ENCODE measurements at regions of chr16 and their contacts with region 1.

Region 1: GRCh38 chr16:85607321-85607765 is 5.8 kb upstream of the GSE1 start:
- DNase-seq: peak; percentile 51 to 76
- H3K4me3 ChIP-seq: peak overlapping the region in 1 of 4 donors; percentile 18
- H3K27ac ChIP-seq: peak overlapping the region in 4 of 5 donors; percentile 48 to 56 (median 55)
- H3K4me1 ChIP-seq: peaks cover 55 to 87% (median 80%) of the 10 kb centered on the region in 4 donors
- H3K27me3 ChIP-seq: no peaks in the 10 kb centered on the region
- CTCF ChIP-seq: no peak
- EP300 ChIP-seq: no peak
- POLR2A ChIP-seq: no peak

Region 2: DNA sequence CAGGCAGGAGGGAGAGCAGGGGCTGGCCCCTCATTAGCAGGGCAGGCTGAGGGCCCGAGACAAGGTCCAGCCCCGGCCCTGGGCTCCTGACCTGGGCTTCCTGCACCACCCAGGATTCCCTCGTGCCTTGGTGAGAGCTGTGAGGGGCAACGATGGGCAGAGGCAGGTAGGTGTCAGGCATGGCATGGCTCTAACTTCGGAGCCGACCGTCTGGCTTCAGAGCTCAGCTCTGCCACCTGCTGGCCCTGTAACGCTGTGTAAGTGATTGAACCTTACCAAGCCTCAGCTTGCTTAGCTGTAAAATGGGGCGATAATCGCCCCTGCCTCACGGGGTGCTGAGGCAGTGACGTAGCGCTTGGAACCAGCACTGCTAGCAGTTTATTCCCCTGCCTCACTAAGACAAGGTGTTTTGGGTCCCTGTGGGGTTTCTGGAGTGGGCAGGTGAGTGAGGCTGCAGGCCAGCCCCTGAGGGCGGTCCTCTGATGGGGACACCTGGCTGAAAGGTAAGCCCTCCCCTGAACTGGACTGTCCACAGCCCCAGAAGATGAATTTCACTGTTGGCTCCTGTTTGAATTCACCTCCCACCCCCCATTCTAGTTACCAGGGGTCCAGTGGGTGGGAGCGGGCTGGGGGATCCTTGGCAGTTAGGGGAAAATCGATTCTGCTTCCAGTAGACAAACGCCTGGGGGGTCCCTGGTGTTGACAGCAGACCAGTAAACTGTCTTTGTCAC is 179.0 kb before region 1 on chr16:
- intact Hi-C with region 1: loop called (anchors 5 kb)
- DNase-seq: peak; percentile 72
- H3K4me3 ChIP-seq: no peak overlapping the region
- H3K27ac ChIP-seq: no peak overlapping the region
- H3K4me1 ChIP-seq: peaks cover 18 to 30% (median 23%) of the 10 kb centered on the region in 4 donors
- H3K27me3 ChIP-seq: no peaks in the 10 kb centered on the region
- CTCF ChIP-seq: peak in 4 of 7 experiments; percentile 27 to 61 (median 49)
- EP300 ChIP-seq: no peak
- POLR2A ChIP-seq: no peak

Region 3: DNA sequence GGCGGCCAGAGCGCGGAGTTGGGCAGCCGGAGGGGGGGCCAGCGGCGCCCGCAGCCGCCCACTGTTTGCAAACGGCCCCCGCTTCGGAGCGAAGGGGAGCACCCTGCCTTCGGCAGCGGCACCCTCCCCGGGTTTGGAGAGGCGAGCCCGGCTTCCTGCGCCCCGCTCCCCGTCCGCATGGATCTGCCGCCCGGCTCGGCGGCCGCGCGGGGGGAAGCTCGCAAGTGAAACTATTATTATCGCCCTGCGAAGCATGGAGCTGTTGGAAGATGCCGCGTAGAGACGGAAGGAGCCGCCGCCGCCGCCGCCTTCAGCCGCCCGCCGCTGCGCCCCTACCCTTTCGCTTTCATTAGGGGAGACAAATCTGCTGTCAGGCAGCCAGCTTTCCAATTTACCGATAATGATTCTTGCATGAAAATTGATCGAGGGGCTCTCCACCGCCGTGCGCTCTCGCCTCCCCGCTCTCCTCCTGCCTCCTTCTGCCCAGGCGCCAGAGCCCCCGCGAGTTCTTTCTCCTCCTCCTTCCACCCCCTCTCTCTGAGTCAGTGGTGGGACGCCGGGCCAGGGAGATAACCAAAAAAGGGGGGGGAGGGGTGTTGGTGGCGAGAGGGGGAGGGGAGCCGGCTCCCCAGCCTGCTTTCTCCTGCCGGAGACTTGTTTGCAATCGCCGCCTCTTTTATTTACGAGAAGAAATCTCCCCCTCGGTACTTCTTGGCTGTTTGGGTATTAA is 52.4 kb before region 1 on chr16:
- intact Hi-C with region 1: loop called (anchors 5 kb)
- DNase-seq: peak; percentile 60 to 85
- H3K4me3 ChIP-seq: peak overlapping the region; percentile 61 to 90 (median 76)
- H3K27ac ChIP-seq: peak overlapping the region; percentile 91 to 97 (median 95)
- H3K4me1 ChIP-seq: peaks cover 36 to 75% (median 61%) of the 10 kb centered on the region in 4 donors
- H3K27me3 ChIP-seq: no peaks in the 10 kb centered on the region
- CTCF ChIP-seq: no peak
- EP300 ChIP-seq: no peak
- POLR2A ChIP-seq: peak in 1 of 4 donors; percentile 9

Region 4: GRCh38 chr16:85688586-85689284 is 81.4 kb after region 1 on chr16 and contains the start of gene GINS2:
- intact Hi-C with region 1: no loop called
- DNase-seq: peak; percentile 93 to 98
- H3K4me3 ChIP-seq: peak within 1 kb of the TSS; percentile 63 to 93 (median 68)
- H3K27ac ChIP-seq: peak within 1 kb of the TSS in 1 of 5 donors; percentile 38
- H3K4me1 ChIP-seq: peaks cover 13 to 26% (median 21%) of the 10 kb centered on the region in 4 donors
- H3K27me3 ChIP-seq: peaks cover 0 to 10% (median 10%) of the 10 kb centered on the region in 3 donors
- CTCF ChIP-seq: no peak
- EP300 ChIP-seq: no peak
- POLR2A ChIP-seq: no peak
- total RNA-seq, gene GINS2: 0.87 to 2.0 (median 1.9) TPM in 4 of 5 donors, not detected in the other

Region 5: GRCh38 chr16:86732621-86733295 is 1125.4 kb after region 1 on chr16:
- intact Hi-C with region 1: no loop called
- DNase-seq: peak in 1 of 2 donors; percentile 30
- H3K4me3 ChIP-seq: no peak overlapping the region
- H3K27ac ChIP-seq: no peak overlapping the region
- H3K4me1 ChIP-seq: no peaks in the 10 kb centered on the region
- H3K27me3 ChIP-seq: peaks cover 0 to 89% (median 35%) of the 10 kb centered on the region in 3 donors
- CTCF ChIP-seq: no peak
- EP300 ChIP-seq: no peak
- POLR2A ChIP-seq: no peak